ENCODE measurements at regions of chr11 and their contacts with region 1.

Region 1: GRCh38 chr11:3841426-3842350 is 929 bp upstream of the RHOG start:
- DNase-seq: peak; percentile 86 to 87
- ATAC-seq: peak; percentile 68 to 83 (median 78)
- H3K4me3 ChIP-seq: peak overlapping the region; percentile 75 to 98 (median 90)
- H3K27ac ChIP-seq: peak overlapping the region; percentile 93 to 100 (median 97)
- H3K4me1 ChIP-seq: peaks cover 11 to 41% (median 36%) of the 10 kb centered on the region in 9 donors
- H3K27me3 ChIP-seq: no peaks in the 10 kb centered on the region
- CTCF ChIP-seq: peak; percentile 61 to 98 (median 92)

Region 2: GRCh38 chr11:3685923-3686322 is 155.8 kb before region 1 on chr11:
- intact Hi-C with region 1: no loop called
- DNase-seq: peak in 1 of 2 donors; percentile 19
- ATAC-seq: peak in 7 of 8 donors; percentile 41 to 77 (median 67)
- H3K4me3 ChIP-seq: no peak overlapping the region
- H3K27ac ChIP-seq: peak overlapping the region in 1 of 10 donors; percentile 10
- H3K4me1 ChIP-seq: peaks cover 0 to 17% (median 10%) of the 10 kb centered on the region in 9 donors
- H3K27me3 ChIP-seq: no peaks in the 10 kb centered on the region
- CTCF ChIP-seq: no peak

Region 3: DNA sequence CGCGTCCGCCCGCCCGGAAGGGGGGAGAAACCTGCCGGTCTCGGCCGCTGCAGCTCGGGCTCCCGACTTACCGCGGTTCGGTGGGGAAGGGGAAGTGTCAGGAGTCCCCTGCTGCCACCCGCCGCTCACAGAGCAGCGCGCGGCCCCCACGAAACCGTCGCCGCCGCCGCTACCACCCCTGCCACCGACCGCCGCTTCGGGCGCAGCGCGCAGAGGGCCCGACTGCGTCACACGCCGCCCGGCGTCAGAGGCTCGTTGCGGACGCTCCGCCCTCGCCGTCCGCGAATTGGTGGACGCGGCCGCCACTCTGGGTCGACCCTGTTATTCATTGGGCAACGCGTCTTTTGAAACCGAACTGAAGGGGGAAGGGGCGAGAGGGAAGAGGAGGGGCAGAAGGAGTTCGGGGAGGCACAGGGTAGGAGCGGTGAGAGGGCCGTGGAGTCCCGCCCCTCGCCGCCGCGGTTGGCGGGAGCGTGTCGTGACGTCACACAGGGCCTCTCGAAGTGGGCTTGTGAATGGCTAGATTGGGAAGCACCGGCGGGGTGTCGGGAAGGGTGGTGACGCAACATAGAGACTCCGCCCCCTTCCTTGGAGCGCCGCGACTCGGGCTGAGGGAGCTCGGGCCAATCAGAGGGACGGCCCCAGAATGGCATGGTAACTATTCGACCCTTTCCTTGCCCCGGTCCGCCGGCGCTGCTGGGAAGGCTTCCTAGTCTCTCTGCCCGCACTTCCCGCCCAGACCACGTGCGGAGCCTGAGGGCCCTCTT is 44.2 kb before region 1 on chr11 and contains the start of gene NUP98:
- intact Hi-C with region 1: loop called in 5 of 10 experiments (anchors 1 to 5 kb)
- DNase-seq: peak; percentile 99 to 100
- ATAC-seq: peak; percentile 95 to 98 (median 97)
- H3K4me3 ChIP-seq: peak within 1 kb of the TSS; percentile 71 to 99 (median 93)
- H3K27ac ChIP-seq: peak within 1 kb of the TSS; percentile 91 to 100 (median 96)
- H3K4me1 ChIP-seq: peaks cover 4 to 37% (median 33%) of the 10 kb centered on the region in 9 donors
- H3K27me3 ChIP-seq: no peaks in the 10 kb centered on the region
- CTCF ChIP-seq: peak in 1 of 9 donors; percentile 0
- total RNA-seq, gene NUP98: 34.8 to 65.5 (median 48.1) TPM

Region 4: GRCh38 chr11:3807909-3808860 is 33.5 kb before region 1 on chr11 and contains the start of gene PGAP2:
- intact Hi-C with region 1: loop called in 1 of 10 experiments (anchors 5 kb)
- DNase-seq: peak; percentile 56 to 72
- ATAC-seq: peak; percentile 63 to 86 (median 76)
- H3K4me3 ChIP-seq: peak within 1 kb of the TSS; percentile 42 to 84 (median 78)
- H3K27ac ChIP-seq: peak within 1 kb of the TSS; percentile 9 to 86 (median 76)
- H3K4me1 ChIP-seq: peaks cover 0 to 47% (median 25%) of the 10 kb centered on the region in 9 donors
- H3K27me3 ChIP-seq: no peaks in the 10 kb centered on the region
- CTCF ChIP-seq: peak; percentile 29 to 80 (median 64)
- total RNA-seq, gene PGAP2: 17.2 to 29.8 (median 20.9) TPM